Tibial artery (tissue), 4 donors: ENCODE measurements at regions of chr2 and their contacts with region 1.

Region 1: GRCh38 chr2:12716282-12717190 is at the start of gene TRIB2:
- DNase-seq: peak; percentile 82 to 95
- H3K4me3 ChIP-seq: peak within 1 kb of the TSS; percentile 80 to 89
- H3K27ac ChIP-seq: peak within 1 kb of the TSS; percentile 91 to 93
- H3K4me1 ChIP-seq: peaks cover 3 to 56% (median 28%) of the 10 kb centered on the region in 4 donors
- H3K27me3 ChIP-seq: no peaks in the 10 kb centered on the region
- CTCF ChIP-seq: no peak

Region 2: GRCh38 chr2:11863513-11864328 is 852.8 kb before region 1 on chr2:
- intact Hi-C with region 1: loop called (anchors 5 kb)
- DNase-seq: peak; percentile 83 to 92
- H3K4me3 ChIP-seq: peak overlapping the region; percentile 10 to 34
- H3K27ac ChIP-seq: peak overlapping the region; percentile 18 to 32
- H3K4me1 ChIP-seq: peaks cover 0 to 6% (median 4%) of the 10 kb centered on the region in 4 donors
- H3K27me3 ChIP-seq: no peaks in the 10 kb centered on the region
- CTCF ChIP-seq: peak; percentile 92 to 93

Region 3: GRCh38 chr2:12416600-12416999 is 299.9 kb before region 1 on chr2:
- intact Hi-C with region 1: loop called (anchors 5 kb)
- DNase-seq: peak; percentile 35 to 72
- H3K4me3 ChIP-seq: no peak overlapping the region
- H3K27ac ChIP-seq: no peak overlapping the region
- H3K4me1 ChIP-seq: peaks cover 0 to 10% (median 6%) of the 10 kb centered on the region in 4 donors
- H3K27me3 ChIP-seq: no peaks in the 10 kb centered on the region
- CTCF ChIP-seq: peak; percentile 54

Region 4: DNA sequence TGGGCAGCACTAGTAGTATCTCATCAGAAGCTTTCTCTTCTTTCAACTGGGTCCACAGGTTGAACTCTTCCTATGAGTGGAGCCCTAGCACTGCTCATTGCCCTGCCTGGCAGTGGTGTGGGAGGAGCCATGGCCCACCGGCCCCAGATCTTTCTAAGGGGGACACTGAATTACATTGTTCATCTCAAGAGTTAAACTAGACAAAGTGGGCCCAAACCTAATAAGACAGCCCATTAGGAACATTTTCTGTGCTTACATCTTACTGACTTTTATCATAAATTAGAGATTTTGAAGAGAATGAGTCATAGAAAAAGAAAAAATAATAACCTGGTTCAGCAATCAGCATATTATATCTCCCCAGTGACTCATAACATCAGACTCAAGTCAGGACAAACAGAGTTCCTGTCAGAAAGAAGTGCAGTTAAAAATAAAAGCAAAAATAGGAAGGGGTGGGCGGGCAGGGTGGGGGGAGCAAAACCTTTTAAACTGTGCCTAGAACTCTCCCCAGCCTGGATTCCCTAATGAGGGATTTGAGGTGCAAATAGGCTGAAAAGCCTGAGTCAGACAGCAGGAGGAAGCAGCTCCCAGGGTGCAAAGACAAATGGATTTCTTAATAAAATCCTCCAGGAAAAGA is 161.4 kb before region 1 on chr2:
- intact Hi-C with region 1: loop called (anchors 5 kb)
- DNase-seq: no peak
- H3K4me3 ChIP-seq: no peak overlapping the region
- H3K27ac ChIP-seq: peak overlapping the region; percentile 20 to 29
- H3K4me1 ChIP-seq: peaks cover 0 to 25% (median 12%) of the 10 kb centered on the region in 4 donors
- H3K27me3 ChIP-seq: no peaks in the 10 kb centered on the region
- CTCF ChIP-seq: peak in 1 of 2 experiments; percentile 16

Region 5: GRCh38 chr2:12787891-12788801 is 71.6 kb after region 1 on chr2:
- intact Hi-C with region 1: no loop called
- DNase-seq: no peak
- H3K4me3 ChIP-seq: no peak overlapping the region
- H3K27ac ChIP-seq: peak overlapping the region in 1 of 2 donors; percentile 8
- H3K4me1 ChIP-seq: no peaks in the 10 kb centered on the region
- H3K27me3 ChIP-seq: no peaks in the 10 kb centered on the region
- CTCF ChIP-seq: no peak

Region 6: GRCh38 chr2:12918835-12919445 is 202.4 kb after region 1 on chr2:
- intact Hi-C with region 1: no loop called
- DNase-seq: peak; percentile 84 to 90
- H3K4me3 ChIP-seq: peak overlapping the region in 1 of 2 donors; percentile 19
- H3K27ac ChIP-seq: peak overlapping the region; percentile 72 to 74
- H3K4me1 ChIP-seq: peaks cover 0 to 19% (median 13%) of the 10 kb centered on the region in 4 donors
- H3K27me3 ChIP-seq: no peaks in the 10 kb centered on the region
- CTCF ChIP-seq: no peak

Region 7: GRCh38 chr2:12931186-12931844 is 214.8 kb after region 1 on chr2:
- intact Hi-C with region 1: loop called (anchors 5 kb)
- DNase-seq: no peak
- H3K4me3 ChIP-seq: no peak overlapping the region
- H3K27ac ChIP-seq: no peak overlapping the region
- H3K4me1 ChIP-seq: peaks cover 0 to 27% (median 5%) of the 10 kb centered on the region in 4 donors
- H3K27me3 ChIP-seq: no peaks in the 10 kb centered on the region
- CTCF ChIP-seq: peak; percentile 82 to 89